A673 (cell line): ENCODE measurements at regions of chr5 and their contacts with region 1.

Region 1: GRCh38 chr5:146965761-146966659 is 87.5 kb upstream of the PPP2R2B start:
- DNase-seq: peak; percentile 78
- H3K4me3 ChIP-seq: no peak overlapping the region
- H3K27ac ChIP-seq: no peak overlapping the region
- H3K4me1 ChIP-seq: peaks cover 4% of the 10 kb centered on the region
- H3K27me3 ChIP-seq: peaks cover 30% of the 10 kb centered on the region
- CTCF ChIP-seq: peak; percentile 83

Region 2: DNA sequence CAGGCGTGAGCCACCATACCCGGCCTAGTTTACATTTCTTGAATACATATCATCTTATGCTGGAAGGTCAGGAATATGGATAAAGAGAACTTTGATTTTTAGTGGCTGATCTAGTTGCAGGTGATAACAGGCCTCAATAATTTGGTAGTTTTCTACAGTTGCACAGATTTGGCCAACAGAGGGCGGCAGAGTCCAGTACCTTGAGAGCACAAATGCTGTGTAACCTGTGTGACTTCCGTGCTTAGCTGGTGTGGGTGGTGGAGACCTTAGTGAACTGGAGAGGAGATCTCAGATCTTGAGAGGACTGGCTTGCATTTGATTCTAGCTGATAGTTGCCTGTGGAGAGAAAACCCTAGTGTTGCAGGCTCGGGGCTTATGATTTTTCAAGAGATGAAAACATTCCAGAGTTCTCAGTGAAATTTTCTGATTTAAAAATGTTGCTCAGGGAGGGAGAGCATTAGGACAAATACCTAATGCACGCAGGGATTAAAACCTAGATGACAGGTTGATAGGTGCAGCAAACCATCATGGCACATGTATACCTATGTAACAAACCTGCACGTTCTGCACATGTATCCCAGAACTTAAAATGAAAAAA is 432.7 kb before region 1 on chr5:
- CTCF ChIA-PET with region 1: interaction called, 9 read pairs
- POLR2A ChIA-PET with region 1: no interaction called
- intact Hi-C with region 1: loop called (anchors 1 kb)
- DNase-seq: peak; percentile 72
- H3K4me3 ChIP-seq: no peak overlapping the region
- H3K27ac ChIP-seq: no peak overlapping the region
- H3K4me1 ChIP-seq: no peaks in the 10 kb centered on the region
- H3K27me3 ChIP-seq: no peaks in the 10 kb centered on the region
- CTCF ChIP-seq: peak; percentile 93

Region 3: DNA sequence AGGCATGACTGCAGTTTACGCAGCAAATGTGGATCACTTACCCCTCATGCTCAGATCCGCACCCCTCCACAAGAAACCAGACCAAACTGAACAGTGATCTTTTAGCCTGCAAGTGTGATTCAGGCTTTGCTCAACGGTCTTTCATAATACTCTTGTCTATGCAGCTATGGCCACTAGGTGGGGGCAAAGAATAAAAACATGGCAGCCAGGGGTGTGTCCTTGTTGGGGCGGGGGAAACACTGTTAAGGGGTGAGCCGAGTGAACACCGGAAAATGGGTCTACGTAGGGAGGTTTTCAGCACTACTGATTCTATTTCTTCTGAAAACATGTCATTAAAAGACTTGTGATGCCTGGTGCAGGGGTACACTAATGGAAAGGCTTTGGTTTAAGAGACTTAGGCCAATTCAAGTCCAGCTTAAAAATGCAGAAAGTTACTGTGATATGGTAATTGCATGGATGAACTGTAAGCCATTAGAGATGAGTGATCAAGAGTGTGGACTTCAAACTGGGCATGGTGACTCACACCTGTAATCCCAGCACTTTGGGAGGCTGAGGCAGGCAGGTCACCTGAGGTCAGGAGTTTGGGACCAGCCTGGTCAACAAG is 400.1 kb before region 1 on chr5:
- CTCF ChIA-PET with region 1: no interaction called
- POLR2A ChIA-PET with region 1: no interaction called
- intact Hi-C with region 1: loop called (anchors 2 kb)
- DNase-seq: peak; percentile 82
- H3K4me3 ChIP-seq: no peak overlapping the region
- H3K27ac ChIP-seq: no peak overlapping the region
- H3K4me1 ChIP-seq: no peaks in the 10 kb centered on the region
- H3K27me3 ChIP-seq: no peaks in the 10 kb centered on the region
- CTCF ChIP-seq: peak; percentile 81

Region 4: DNA sequence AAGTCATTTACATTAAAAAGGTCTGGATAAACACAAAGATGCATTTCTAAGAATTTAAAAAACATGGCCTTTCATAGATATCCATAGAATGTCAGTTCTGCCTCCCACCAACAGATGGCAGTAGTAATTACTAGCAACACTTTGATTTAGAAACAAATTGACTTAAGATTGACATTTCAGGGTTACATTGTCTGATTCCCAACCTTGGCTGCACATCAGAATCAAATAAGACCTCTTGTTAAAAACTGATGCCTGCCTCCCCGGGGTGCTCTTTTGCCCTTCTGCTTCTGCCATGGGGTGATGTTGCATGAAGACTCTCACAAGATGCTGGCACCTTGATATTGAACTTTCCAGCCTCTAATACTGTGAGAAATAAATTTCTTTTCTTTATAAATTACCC is 303.8 kb before region 1 on chr5:
- CTCF ChIA-PET with region 1: interaction called, 4 read pairs
- POLR2A ChIA-PET with region 1: no interaction called
- intact Hi-C with region 1: loop called (anchors 1 kb)
- DNase-seq: peak; percentile 43
- H3K4me3 ChIP-seq: no peak overlapping the region
- H3K27ac ChIP-seq: no peak overlapping the region
- H3K4me1 ChIP-seq: no peaks in the 10 kb centered on the region
- H3K27me3 ChIP-seq: peaks cover 33% of the 10 kb centered on the region
- CTCF ChIP-seq: peak; percentile 69

Region 5: GRCh38 chr5:146993876-146994530 is 28.0 kb after region 1 on chr5:
- CTCF ChIA-PET with region 1: no interaction called
- POLR2A ChIA-PET with region 1: no interaction called
- intact Hi-C with region 1: no loop called
- DNase-seq: no peak
- H3K4me3 ChIP-seq: no peak overlapping the region
- H3K27ac ChIP-seq: no peak overlapping the region
- H3K4me1 ChIP-seq: no peaks in the 10 kb centered on the region
- H3K27me3 ChIP-seq: peaks cover 8% of the 10 kb centered on the region
- CTCF ChIP-seq: no peak

Region 6: DNA sequence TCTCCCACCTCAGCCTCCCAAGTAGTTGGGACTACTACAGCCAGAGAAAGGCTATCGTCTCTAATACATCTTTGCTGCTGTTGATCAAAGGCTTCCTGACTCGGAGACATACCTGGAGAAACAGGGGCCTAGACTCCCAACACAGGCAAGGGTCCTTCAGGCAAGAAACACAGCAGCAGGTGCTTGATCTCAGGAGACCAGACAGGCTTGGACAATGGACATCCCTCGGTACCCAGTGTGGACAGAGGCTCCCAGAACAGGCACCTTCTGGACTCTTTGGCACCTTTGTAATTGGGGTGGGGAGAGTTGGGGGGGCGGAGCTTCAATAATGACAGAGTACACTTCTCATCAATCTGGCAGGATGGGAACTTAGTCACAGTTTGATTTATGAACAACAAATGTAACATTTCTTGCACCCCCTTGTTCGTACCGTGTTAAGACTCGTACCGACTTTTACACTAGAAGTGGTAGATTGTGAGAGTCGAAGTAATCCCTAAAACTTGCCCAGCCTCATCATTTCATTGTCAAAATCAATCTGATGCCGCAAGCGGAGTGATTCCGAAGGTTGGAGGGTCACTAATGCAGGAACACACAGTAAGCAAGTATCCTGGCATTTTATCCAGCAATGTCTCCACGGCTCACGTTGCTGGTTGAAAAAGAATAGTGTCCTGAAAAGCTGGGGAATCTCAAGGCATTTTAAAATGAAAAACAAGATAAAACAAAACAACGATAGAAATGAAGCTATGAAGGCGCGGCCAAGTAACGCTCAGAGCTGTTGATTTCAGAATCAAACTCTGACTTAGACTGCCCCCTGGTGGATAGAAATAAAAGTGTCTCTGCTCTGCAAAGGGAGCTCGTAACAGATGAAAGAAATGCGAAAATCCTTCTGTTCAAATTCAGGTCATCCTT is 222.4 kb after region 1 on chr5:
- CTCF ChIA-PET with region 1: interaction called, 6 read pairs
- POLR2A ChIA-PET with region 1: no interaction called
- intact Hi-C with region 1: loop called (anchors 5 kb)
- DNase-seq: peak; percentile 76
- H3K4me3 ChIP-seq: no peak overlapping the region
- H3K27ac ChIP-seq: no peak overlapping the region
- H3K4me1 ChIP-seq: no peaks in the 10 kb centered on the region
- H3K27me3 ChIP-seq: peaks cover 24% of the 10 kb centered on the region
- CTCF ChIP-seq: peak; percentile 90

Region 7: DNA sequence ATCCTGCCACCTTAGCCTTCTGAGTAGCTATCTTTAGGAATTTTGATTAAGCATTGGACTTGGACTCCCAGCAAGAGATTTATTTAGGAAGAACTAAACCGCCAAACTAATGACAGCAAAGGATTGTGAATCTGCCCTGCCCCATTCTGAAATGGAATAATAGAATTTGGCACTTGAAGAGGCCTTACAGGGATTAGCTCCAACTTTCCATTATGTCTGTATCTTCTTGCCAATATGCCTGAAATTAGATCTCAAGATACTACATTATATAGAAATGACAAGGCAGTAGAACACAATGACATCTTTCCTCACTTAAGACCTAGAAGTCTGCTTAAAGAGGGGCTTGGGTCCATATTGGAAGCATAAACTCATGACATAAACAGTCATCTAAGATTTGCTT is 620.8 kb after region 1 on chr5:
- CTCF ChIA-PET with region 1: no interaction called
- POLR2A ChIA-PET with region 1: no interaction called
- intact Hi-C with region 1: no loop called
- DNase-seq: no peak
- H3K4me3 ChIP-seq: no peak overlapping the region
- H3K27ac ChIP-seq: no peak overlapping the region
- H3K4me1 ChIP-seq: peaks cover 10% of the 10 kb centered on the region
- H3K27me3 ChIP-seq: no peaks in the 10 kb centered on the region
- CTCF ChIP-seq: no peak